Endothelial cell of umbilical vein (primary cell): ENCODE measurements at regions of chr15 and their contacts with region 1.

Region 1: GRCh38 chr15:62337934-62338333 is 172.8 kb upstream of the C2CD4B start:
- DNase-seq: no peak
- H3K4me3 ChIP-seq: no peak overlapping the region
- H3K27ac ChIP-seq: no peak overlapping the region
- H3K4me1 ChIP-seq: no peaks in the 10 kb centered on the region
- H3K27me3 ChIP-seq: no peaks in the 10 kb centered on the region
- CTCF ChIP-seq: no peak
- POLR2A ChIP-seq: no peak

Region 2: DNA sequence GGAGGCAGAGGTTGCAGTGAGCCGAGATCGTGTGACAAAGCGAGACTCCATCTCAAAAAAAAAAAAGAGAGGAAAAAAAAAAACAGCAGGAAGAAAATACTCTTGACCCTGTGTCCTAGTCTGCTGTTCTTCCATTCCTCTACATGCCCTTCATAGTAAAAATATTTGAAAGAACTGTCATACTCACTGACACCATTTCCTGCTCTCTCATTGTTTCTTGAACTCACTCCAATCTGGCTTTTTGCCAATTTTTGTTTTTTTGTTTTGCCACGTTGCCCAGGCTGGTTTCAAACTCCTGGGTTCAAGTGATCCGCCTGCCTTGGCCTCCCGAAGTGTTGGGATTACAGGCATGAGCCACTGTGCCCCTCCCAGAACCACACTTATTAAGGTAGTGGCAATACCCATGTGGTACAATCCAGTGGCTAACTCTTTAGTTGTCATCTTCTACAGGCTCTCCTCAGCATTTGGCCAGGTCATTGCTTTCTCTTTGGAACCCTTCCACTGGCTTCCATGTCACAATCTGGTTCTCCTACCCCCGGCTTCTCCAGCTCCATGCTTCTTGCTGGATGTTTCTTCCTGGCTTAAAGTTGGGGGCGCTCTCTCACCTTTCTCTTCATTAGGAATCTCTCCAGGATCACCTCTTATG is 65.4 kb after region 1 on chr15:
- CTCF ChIA-PET with region 1: no interaction called
- POLR2A ChIA-PET with region 1: interaction called, 10 read pairs
- dilution Hi-C with region 1: no loop called
- intact Hi-C with region 1: no loop called
- DNase-seq: peak; percentile 11
- H3K4me3 ChIP-seq: no peak overlapping the region
- H3K27ac ChIP-seq: no peak overlapping the region
- H3K4me1 ChIP-seq: peaks cover 5% of the 10 kb centered on the region
- H3K27me3 ChIP-seq: no peaks in the 10 kb centered on the region
- CTCF ChIP-seq: no peak
- POLR2A ChIP-seq: no peak